ENCODE measurements at regions of chr20 and their contacts with region 1.

Region 1: GRCh38 chr20:51767010-51767558 is 1.1 kb downstream of the ATP9A start:
- DNase-seq: peak; percentile 80
- H3K4me3 ChIP-seq: peak overlapping the region; percentile 54 to 70 (median 56)
- H3K27ac ChIP-seq: peak overlapping the region; percentile 19
- H3K4me1 ChIP-seq: peaks cover 6% of the 10 kb centered on the region
- H3K27me3 ChIP-seq: no peaks in the 10 kb centered on the region
- CTCF ChIP-seq: no peak

Region 2: DNA sequence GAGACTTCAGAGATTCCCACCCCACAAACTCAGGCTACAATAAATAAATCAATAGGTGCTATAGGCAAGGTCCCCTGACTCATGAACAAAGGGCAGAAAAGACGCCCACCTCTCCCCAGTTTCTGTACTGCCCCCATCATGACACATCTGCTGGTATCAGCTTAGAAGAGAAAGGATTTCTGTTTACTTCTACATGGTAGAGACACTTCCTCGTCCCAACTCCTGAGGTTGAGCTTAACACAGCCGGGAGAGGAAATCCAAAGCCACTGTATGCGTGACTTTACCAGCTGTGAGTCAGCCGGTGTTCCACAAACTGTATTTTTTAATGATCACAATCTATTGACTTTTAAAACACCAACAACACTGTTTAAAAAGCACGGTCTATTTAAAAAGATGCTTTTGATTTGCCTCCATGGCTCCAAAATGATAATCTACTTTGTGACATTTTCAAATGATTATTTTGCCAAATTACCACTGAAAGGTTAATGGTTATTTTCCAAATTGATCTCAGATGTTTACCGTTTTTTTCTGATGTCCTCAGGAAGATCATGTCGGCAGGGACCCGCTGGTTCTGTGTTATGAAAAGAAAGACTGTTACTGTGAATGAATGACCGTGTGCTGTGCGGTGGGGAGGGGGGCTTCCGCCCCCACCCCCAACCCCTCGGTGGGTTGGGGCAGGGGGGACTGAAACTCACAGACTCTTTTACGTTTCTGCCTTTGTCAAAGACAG is 71.3 kb before region 1 on chr20:
- CTCF ChIA-PET with region 1: no interaction called
- dilution Hi-C with region 1: no loop called
- in situ Hi-C with region 1: no loop called
- intact Hi-C with region 1: loop called (anchors 10 kb)
- DNase-seq: peak; percentile 58
- H3K4me3 ChIP-seq: no peak overlapping the region
- H3K27ac ChIP-seq: peak overlapping the region; percentile 20
- H3K4me1 ChIP-seq: peaks cover 11% of the 10 kb centered on the region
- H3K27me3 ChIP-seq: no peaks in the 10 kb centered on the region
- CTCF ChIP-seq: no peak

Region 3: GRCh38 chr20:51725380-51726203 is 41.5 kb before region 1 on chr20:
- CTCF ChIA-PET with region 1: no interaction called
- dilution Hi-C with region 1: no loop called
- in situ Hi-C with region 1: no loop called
- intact Hi-C with region 1: no loop called
- DNase-seq: peak; percentile 65
- H3K4me3 ChIP-seq: no peak overlapping the region
- H3K27ac ChIP-seq: no peak overlapping the region
- H3K4me1 ChIP-seq: peaks cover 5% of the 10 kb centered on the region
- H3K27me3 ChIP-seq: no peaks in the 10 kb centered on the region
- CTCF ChIP-seq: no peak

Region 4: DNA sequence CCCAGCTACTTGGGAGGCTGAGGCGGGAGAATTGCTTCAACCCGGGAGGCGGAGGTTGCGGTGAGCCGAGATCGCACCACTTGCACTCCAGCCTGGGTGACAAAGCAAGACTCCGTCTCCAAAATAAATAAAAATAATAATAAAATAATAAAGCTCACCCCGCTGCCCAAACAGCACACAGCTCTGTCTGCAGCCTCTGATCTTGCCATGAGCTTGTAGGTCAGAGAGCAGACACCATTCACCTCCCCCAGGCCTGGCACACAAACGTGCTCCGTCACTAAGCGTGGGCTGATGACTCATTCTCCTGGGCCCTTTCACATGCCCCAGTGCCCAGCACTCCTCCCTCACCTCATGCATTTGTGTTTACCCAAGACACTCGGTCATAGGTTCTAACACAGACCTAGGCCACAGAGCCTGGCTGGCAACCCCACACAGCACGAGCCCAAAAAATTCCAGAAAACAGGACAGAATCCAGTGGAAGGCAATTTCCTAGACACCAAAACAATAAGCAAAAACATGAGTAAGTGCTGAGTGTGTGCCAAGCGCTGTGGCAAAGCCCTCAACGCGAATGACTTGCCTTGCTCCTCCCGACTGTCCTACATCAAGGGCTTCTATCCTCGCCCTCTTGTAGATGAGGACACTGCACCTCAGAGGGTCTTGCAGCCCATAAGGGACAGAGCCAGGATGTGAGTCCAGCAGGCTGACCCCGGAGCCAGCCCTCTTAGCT is 16.9 kb before region 1 on chr20:
- CTCF ChIA-PET with region 1: no interaction called
- dilution Hi-C with region 1: no loop called
- in situ Hi-C with region 1: no loop called
- intact Hi-C with region 1: loop called (anchors 2 kb)
- DNase-seq: peak; percentile 94
- H3K4me3 ChIP-seq: no peak overlapping the region
- H3K27ac ChIP-seq: peak overlapping the region; percentile 53
- H3K4me1 ChIP-seq: peaks cover 25% of the 10 kb centered on the region
- H3K27me3 ChIP-seq: no peaks in the 10 kb centered on the region
- CTCF ChIP-seq: no peak